G401 (cell line): ENCODE measurements at regions of chr5 and their contacts with region 1.

Region 1: GRCh38 chr5:150340614-150341255 is 16.8 kb upstream of the TCOF1 start:
- DNase-seq: no peak

Region 2: DNA sequence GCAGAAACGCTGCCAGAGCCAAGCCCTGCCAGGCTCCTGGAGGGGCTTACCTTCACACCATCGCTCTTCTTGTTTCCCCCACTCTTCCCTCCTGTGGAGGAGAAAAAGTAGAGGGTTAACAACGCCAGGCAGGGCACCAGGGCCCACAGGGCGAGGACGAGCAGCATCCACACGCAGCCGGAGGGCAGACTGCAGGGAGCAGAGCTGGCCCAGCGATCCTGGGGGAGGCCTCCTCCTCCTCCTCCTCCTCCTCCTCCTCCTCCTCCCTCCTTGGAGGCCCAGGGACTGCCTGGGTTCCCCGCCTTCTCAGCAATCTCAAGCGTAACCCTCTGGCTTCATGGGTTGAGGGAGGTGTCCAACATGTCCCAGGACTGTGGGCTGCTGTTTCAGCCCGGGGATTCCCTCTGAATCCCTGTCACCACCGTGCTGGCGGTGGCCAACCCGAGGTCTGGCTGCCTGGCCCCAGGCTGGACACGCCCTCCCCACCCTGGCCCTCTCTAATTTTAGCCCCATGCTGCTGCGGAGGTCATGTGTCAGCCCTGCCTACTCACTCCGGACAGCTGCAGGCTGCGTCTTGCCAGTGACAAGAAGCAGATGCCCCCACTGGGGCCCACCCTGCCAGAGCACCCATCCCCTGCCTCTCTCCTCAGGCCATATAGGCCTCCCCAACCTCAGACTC is 95.5 kb before region 1 on chr5:
- in situ Hi-C with region 1: no loop called
- DNase-seq: no peak

Region 3: DNA sequence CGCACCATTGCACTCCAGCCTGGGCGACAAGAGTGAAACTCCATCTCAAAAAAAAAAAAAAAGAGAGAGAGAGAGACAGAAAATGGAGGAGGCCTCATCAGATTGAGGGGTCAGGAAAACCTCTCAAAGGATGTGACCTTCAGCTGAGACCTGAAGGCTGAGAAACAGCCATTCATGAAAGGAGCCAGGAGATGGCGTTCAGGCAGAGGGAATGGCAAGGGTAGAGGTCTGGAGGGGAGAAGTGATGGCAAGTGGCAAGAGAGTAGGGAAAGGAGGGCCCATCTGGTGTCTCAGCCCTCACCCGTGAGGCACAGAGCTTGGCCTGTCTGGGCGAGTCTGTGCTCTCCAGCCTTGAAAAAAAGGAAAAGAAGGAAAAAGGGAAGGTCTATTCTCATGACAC is 68.2 kb before region 1 on chr5:
- in situ Hi-C with region 1: loop called (anchors 10 kb)
- DNase-seq: peak; percentile 95